PC-3 (cell line): ENCODE measurements at regions of chr2 and their contacts with region 1.

Region 1: DNA sequence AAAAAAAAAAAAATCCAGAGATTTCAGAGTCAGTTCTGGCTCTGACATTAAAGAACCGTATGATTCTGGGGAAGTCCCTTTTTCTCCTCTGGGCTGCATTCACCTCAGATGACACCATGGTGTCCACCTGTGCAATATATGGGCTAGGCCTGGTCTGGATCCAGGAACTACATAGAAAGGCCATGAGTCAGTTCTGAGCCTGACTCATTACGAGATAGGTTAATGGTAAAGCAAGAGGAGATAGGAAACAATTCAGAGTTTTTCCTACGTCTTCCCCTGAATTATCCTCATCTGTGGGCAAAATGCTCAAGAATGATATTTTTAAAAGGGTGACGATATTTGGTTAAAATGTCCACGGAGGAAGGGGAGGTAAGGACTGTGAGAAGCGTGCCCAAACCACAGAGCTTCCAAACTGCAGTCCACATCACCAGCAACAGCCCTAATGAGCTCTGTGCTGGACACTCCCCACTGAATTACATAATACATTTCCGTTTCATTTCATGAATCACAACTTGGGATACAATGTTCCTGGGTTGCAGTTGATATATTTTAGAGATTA is 180.1 kb upstream of the OSR1 start:
- DNase-seq: peak; percentile 99
- ATAC-seq: peak; percentile 73
- H3K4me3 ChIP-seq: 0 out of 2 replicates have a peak overlapping the region, but pooled peaks have one; percentile 31
- H3K27ac ChIP-seq: peak overlapping the region; percentile 98
- H3K4me1 ChIP-seq: peaks cover 57% of the 10 kb centered on the region
- H3K27me3 ChIP-seq: no peaks in the 10 kb centered on the region
- CTCF ChIP-seq: no peak

Region 2: DNA sequence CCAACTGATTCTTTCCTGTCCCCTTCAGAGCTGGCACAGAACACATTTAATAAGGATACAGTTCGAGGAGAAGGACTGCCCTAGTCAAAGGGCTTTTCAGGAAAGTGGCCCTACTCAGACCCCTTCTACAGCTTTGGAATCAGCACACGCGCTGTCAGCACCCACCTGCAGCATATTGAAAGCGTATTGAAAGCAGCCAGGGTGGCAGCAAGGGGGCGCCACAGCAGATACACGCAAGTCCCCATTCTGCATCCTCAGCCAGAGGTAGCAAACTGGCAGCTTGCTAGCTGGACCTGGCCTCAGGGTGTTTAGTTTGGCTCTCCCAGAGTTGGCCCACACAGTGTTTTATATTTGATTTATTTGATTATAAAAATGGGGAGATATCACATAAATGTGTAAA is 848.1 kb before region 1 on chr2:
- CTCF ChIA-PET with region 1: no interaction called
- POLR2A ChIA-PET with region 1: no interaction called
- intact Hi-C with region 1: no loop called
- DNase-seq: no peak
- ATAC-seq: no peak
- H3K4me3 ChIP-seq: no peak overlapping the region
- H3K27ac ChIP-seq: no peak overlapping the region
- H3K4me1 ChIP-seq: no peaks in the 10 kb centered on the region
- H3K27me3 ChIP-seq: no peaks in the 10 kb centered on the region
- CTCF ChIP-seq: peak; percentile 49

Region 3: GRCh38 chr2:19369341-19369955 is 169.0 kb before region 1 on chr2:
- CTCF ChIA-PET with region 1: no interaction called
- POLR2A ChIA-PET with region 1: no interaction called
- intact Hi-C with region 1: loop called (anchors 1 kb)
- DNase-seq: peak; percentile 68
- ATAC-seq: peak; percentile 74
- H3K4me3 ChIP-seq: no peak overlapping the region
- H3K27ac ChIP-seq: no peak overlapping the region
- H3K4me1 ChIP-seq: no peaks in the 10 kb centered on the region
- H3K27me3 ChIP-seq: no peaks in the 10 kb centered on the region
- CTCF ChIP-seq: peak; percentile 83

Region 4: GRCh38 chr2:19474128-19474527 is 64.4 kb before region 1 on chr2:
- CTCF ChIA-PET with region 1: no interaction called
- POLR2A ChIA-PET with region 1: no interaction called
- intact Hi-C with region 1: loop called (anchors 2 kb)
- DNase-seq: peak; percentile 60
- ATAC-seq: no peak
- H3K4me3 ChIP-seq: no peak overlapping the region
- H3K27ac ChIP-seq: no peak overlapping the region
- H3K4me1 ChIP-seq: peaks cover 12% of the 10 kb centered on the region
- H3K27me3 ChIP-seq: no peaks in the 10 kb centered on the region
- CTCF ChIP-seq: no peak

Region 5: DNA sequence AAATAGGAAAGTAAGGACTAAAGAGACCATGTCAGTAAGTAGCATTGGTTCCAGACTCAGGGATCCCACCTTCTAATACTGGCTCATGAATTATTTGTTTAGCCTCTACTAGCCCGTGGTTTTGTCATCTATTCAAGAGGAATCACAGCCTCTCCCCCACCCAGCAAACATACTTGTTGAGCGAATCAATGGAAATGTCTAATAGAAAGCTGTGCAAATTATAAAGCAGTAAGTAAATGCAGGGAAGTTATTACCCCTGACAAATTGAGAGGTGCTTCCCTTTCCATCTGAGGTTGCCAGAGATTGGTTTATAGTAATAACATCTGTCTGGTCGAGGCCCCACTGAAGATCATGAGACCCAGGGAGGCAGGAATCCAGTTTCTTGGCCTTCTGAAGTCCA is 39.2 kb after region 1 on chr2:
- CTCF ChIA-PET with region 1: no interaction called
- POLR2A ChIA-PET with region 1: no interaction called
- intact Hi-C with region 1: loop called (anchors 1 kb)
- DNase-seq: peak; percentile 74
- ATAC-seq: peak; percentile 65
- H3K4me3 ChIP-seq: peak overlapping the region; percentile 10; the same call in 1 of the 2 replicates
- H3K27ac ChIP-seq: peak overlapping the region; percentile 53
- H3K4me1 ChIP-seq: peaks cover 57% of the 10 kb centered on the region
- H3K27me3 ChIP-seq: no peaks in the 10 kb centered on the region
- CTCF ChIP-seq: no peak

Region 6: GRCh38 chr2:19589791-19590190 is 51.3 kb after region 1 on chr2:
- CTCF ChIA-PET with region 1: no interaction called
- POLR2A ChIA-PET with region 1: no interaction called
- intact Hi-C with region 1: no loop called
- DNase-seq: no peak
- ATAC-seq: no peak
- H3K4me3 ChIP-seq: no peak overlapping the region
- H3K27ac ChIP-seq: no peak overlapping the region
- H3K4me1 ChIP-seq: peaks cover 9% of the 10 kb centered on the region; the same call in 1 of the 2 replicates
- H3K27me3 ChIP-seq: no peaks in the 10 kb centered on the region
- CTCF ChIP-seq: no peak

Region 7: DNA sequence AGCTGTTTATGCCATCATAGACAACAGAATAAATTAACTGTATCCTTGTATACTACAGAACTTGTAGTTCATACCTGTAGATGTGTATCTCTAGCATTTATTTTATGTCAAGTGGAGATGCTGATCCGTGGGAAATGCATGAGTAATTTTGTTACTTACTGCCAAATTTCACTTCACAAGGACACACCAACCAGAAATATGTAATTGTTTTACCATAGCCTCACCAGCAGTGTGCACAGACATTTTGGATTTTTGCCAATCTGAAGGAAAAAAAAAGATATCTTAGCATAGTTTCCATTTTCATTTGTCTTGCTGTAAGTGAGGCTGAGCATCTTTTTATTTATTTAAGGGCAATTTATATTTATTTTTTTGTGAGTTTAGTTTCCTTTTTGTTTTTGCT is 85.0 kb after region 1 on chr2:
- CTCF ChIA-PET with region 1: interaction called, 4 read pairs
- POLR2A ChIA-PET with region 1: no interaction called
- intact Hi-C with region 1: loop called (anchors 1 kb)
- DNase-seq: peak; percentile 78
- ATAC-seq: peak; percentile 68
- H3K4me3 ChIP-seq: no peak overlapping the region
- H3K27ac ChIP-seq: no peak overlapping the region
- H3K4me1 ChIP-seq: 0 out of 2 replicates have a peak, but pooled peaks cover 7% of the 10 kb centered on the region
- H3K27me3 ChIP-seq: no peaks in the 10 kb centered on the region
- CTCF ChIP-seq: no peak

Region 8: GRCh38 chr2:19675856-19676460 is 137.5 kb after region 1 on chr2:
- CTCF ChIA-PET with region 1: no interaction called
- POLR2A ChIA-PET with region 1: no interaction called
- intact Hi-C with region 1: no loop called
- DNase-seq: peak; percentile 39
- ATAC-seq: peak; percentile 53
- H3K4me3 ChIP-seq: no peak overlapping the region
- H3K27ac ChIP-seq: no peak overlapping the region
- H3K4me1 ChIP-seq: peaks cover 32% of the 10 kb centered on the region
- H3K27me3 ChIP-seq: no peaks in the 10 kb centered on the region
- CTCF ChIP-seq: no peak

Region 9: GRCh38 chr2:19819097-19820065 is 280.9 kb after region 1 on chr2:
- CTCF ChIA-PET with region 1: no interaction called
- POLR2A ChIA-PET with region 1: no interaction called
- intact Hi-C with region 1: no loop called
- DNase-seq: peak; percentile 93
- ATAC-seq: peak; percentile 73
- H3K4me3 ChIP-seq: no peak overlapping the region
- H3K27ac ChIP-seq: peak overlapping the region; percentile 51
- H3K4me1 ChIP-seq: peaks cover 18% of the 10 kb centered on the region
- H3K27me3 ChIP-seq: no peaks in the 10 kb centered on the region
- CTCF ChIP-seq: no peak

Region 10: GRCh38 chr2:19863303-19864041 is 325.0 kb after region 1 on chr2:
- CTCF ChIA-PET with region 1: no interaction called
- POLR2A ChIA-PET with region 1: no interaction called
- intact Hi-C with region 1: loop called (anchors 2 kb)
- DNase-seq: peak; percentile 73
- ATAC-seq: peak; percentile 84
- H3K4me3 ChIP-seq: peak overlapping the region; percentile 53
- H3K27ac ChIP-seq: no peak overlapping the region
- H3K4me1 ChIP-seq: peaks cover 15% of the 10 kb centered on the region
- H3K27me3 ChIP-seq: no peaks in the 10 kb centered on the region
- CTCF ChIP-seq: peak; percentile 96